RWPE1 (cell line): ENCODE measurements at regions of chr16 and their contacts with region 1.

Region 1: GRCh38 chr16:10616730-10617555 is 36.5 kb upstream of the EMP2 start:
- DNase-seq: peak; percentile 76
- H3K27ac ChIP-seq: peak overlapping the region; percentile 92
- CTCF ChIP-seq: peak; percentile 26; the same call in 1 of the 2 replicates

Region 2: GRCh38 chr16:11546608-11547061 is 929.7 kb after region 1 on chr16:
- CTCF ChIA-PET with region 1: no interaction called
- POLR2A ChIA-PET with region 1: interaction called, 10 read pairs
- DNase-seq: no peak
- H3K27ac ChIP-seq: no peak overlapping the region
- CTCF ChIP-seq: no peak